Common myeloid progenitor, CD34-positive (primary cell): ENCODE measurements at regions of chr12 and their contacts with region 1.

Region 1: DNA sequence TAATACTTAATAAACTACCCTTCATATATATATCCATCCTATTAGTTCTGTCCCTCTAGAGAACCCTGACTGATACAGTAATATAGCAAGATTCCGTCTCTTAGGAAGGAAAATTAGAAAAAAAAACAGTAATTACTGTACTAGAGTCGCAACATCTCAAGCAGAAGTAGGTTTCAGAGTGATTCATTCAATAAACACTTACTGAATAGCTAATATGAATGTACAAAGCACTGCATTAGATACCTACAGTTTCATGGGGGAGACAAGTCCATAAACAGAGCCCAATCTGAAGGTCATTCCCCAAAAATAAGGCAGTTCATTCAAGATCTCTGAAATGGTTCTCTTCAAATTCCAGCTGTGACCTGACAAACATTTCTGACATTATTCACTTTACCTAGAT is 9.9 kb downstream of the CERS5 start:
- DNase-seq: no peak
- H3K4me3 ChIP-seq: no peak overlapping the region
- H3K27ac ChIP-seq: no peak overlapping the region
- H3K4me1 ChIP-seq: peaks cover 0 to 3% (median 0%) of the 10 kb centered on the region in 4 experiments
- H3K27me3 ChIP-seq: no peaks in the 10 kb centered on the region

Region 2: DNA sequence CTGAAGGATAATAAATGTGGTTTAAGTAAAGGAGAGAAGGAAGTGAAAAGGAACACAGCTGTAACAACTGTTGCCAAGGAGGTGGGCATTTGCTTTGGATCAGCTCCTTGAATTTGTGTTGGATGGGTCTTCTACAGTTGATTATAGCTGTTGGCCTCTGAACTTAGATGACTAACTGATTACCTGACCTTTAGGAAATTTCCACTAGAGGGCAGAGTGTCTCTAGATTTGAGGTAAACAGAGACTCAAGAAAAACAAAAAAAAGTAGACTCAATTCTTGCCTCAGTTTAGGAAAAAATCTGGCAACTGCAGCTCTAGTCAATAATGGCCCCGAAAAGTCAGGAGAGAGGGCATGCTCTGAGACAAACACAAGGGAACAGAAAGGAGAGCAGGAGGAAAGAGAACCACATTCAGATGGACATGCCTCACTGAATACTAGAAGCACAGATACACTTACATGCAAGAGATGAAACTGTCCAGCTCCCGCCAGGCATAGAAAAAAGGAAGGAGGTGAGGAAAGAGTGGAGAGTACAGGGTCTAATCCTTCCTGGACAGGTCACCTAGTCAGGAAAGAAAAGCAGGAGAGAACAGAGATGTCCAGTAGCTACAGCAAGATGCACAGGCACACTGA is 24.6 kb before region 1 on chr12:
- CTCF ChIA-PET with region 1: interaction called, 18 read pairs
- POLR2A ChIA-PET with region 1: no interaction called
- DNase-seq: peak; percentile 46 to 74 (median 51)
- H3K4me3 ChIP-seq: no peak overlapping the region
- H3K27ac ChIP-seq: no peak overlapping the region
- H3K4me1 ChIP-seq: no peaks in the 10 kb centered on the region
- H3K27me3 ChIP-seq: no peaks in the 10 kb centered on the region

Region 3: DNA sequence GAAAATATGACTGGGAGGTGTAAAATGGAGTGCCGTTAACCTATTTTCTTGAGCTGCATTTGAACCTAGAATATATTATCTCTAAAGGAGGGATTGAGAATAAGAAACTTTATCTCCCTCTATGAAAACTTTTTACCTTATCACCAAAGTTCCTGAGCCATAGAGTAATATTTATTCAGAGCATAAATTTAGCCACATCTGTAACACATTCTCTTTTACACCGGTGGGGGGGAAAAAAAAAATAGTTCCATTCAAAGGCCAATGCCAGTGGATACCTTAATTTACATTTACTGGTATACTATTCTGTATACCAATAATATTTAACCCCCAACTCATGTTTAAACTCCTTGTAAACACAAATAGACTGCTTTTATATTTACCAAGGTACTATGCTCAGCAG is 11.8 kb before region 1 on chr12:
- CTCF ChIA-PET with region 1: interaction called, 13 read pairs
- POLR2A ChIA-PET with region 1: interaction called, 4 read pairs
- DNase-seq: no peak
- H3K4me3 ChIP-seq: no peak overlapping the region
- H3K27ac ChIP-seq: no peak overlapping the region
- H3K4me1 ChIP-seq: no peaks in the 10 kb centered on the region
- H3K27me3 ChIP-seq: no peaks in the 10 kb centered on the region